ENCODE measurements at regions of chr3 and their contacts with region 1.

Region 1: DNA sequence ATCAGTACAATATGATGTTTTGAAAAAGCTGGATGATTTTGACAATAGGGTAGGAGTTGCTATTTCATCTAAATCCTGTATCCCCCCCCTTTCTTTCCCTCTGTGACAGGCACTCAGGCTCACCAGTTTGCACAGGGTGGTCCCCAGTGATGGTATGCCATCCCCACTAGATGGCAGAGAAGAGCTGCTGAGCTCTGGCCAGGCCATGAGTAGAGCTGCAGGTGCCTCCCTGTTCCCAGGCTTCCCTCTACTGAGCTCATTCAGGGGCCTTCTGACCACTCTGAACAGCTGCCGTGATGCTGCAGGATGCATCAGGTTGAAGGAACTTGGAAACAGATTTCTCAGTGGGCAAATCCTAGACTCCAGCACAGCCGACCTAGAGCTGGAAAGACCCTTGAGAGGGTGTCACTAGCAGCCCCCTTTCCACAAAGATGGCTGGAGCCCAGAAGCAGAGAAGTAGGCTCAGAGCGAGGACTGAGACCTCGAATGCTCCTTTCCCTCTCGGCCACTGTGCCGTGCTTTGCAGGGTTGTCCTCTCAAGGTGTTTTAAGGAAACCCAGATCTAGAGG is 45.1 kb downstream of the EFCAB12 start:
- DNase-seq: peak; percentile 77
- ATAC-seq: peak; percentile 98
- H3K4me3 Mint-ChIP-seq: no peak overlapping the region
- H3K27ac Mint-ChIP-seq: no peak overlapping the region
- H3K4me1 Mint-ChIP-seq: peaks cover 13% of the 10 kb centered on the region
- H3K27me3 Mint-ChIP-seq: no peaks in the 10 kb centered on the region; the same call in 1 of the 2 replicates
- CTCF ChIP-seq: peak; percentile 58

Region 2: DNA sequence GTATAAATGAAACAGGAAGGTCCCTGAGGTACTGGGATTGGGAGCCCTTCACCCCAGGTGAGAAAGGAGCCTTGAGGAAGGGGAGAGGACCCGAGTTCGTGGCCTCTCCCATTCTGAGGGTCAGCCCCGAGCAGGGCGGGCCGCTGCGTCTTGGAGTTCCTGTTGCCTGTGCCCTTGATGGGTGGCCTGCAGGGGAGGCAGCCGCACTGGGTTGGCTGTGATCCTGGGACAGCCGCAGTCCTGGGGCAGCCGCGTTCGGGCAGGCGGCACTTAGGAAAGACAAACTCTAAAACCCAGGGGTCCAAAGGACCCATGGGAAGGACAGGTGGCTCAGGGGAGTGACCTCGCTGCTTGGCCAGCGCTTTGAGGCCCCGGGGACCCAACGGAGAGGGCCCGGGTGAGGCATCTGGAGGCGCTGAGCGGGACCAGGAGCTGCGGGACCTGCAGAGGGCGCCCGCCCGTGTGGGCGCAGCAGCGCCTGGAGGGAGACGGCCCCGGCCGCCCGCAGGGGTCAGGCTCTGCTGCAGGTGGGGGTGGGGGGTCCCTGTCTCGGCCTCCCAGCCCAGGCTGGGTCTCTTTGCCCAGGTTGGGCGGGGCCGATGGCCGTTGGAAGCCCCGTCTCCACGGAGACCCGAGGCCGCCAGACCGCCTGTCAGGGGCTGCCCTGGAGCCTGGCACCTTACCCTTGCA is 39.6 kb before region 1 on chr3:
- CTCF ChIA-PET with region 1: interaction called, 17 read pairs
- POLR2A ChIA-PET with region 1: no interaction called
- DNase-seq: peak; percentile 75
- ATAC-seq: peak; percentile 84
- H3K4me3 Mint-ChIP-seq: peak overlapping the region; percentile 65
- H3K27ac Mint-ChIP-seq: no peak overlapping the region
- H3K4me1 Mint-ChIP-seq: peaks cover 13% of the 10 kb centered on the region
- H3K27me3 Mint-ChIP-seq: peaks cover 5% of the 10 kb centered on the region
- CTCF ChIP-seq: no peak

Region 3: GRCh38 chr3:129352045-129352444 is 31.3 kb before region 1 on chr3:
- CTCF ChIA-PET with region 1: interaction called, 16 read pairs
- POLR2A ChIA-PET with region 1: no interaction called
- DNase-seq: peak; percentile 47
- ATAC-seq: peak; percentile 88
- H3K4me3 Mint-ChIP-seq: no peak overlapping the region
- H3K27ac Mint-ChIP-seq: no peak overlapping the region
- H3K4me1 Mint-ChIP-seq: peaks cover 5% of the 10 kb centered on the region; the same call in 1 of the 2 replicates
- H3K27me3 Mint-ChIP-seq: no peaks in the 10 kb centered on the region
- CTCF ChIP-seq: 0 out of 2 replicates have a peak, but pooled peaks have one; percentile 27

Region 4: GRCh38 chr3:129367821-129368220 is 15.6 kb before region 1 on chr3:
- CTCF ChIA-PET with region 1: interaction called, 13 read pairs
- POLR2A ChIA-PET with region 1: no interaction called
- DNase-seq: no peak
- ATAC-seq: no peak
- H3K4me3 Mint-ChIP-seq: no peak overlapping the region
- H3K27ac Mint-ChIP-seq: no peak overlapping the region
- H3K4me1 Mint-ChIP-seq: no peaks in the 10 kb centered on the region
- H3K27me3 Mint-ChIP-seq: peaks cover 5% of the 10 kb centered on the region; the same call in 1 of the 2 replicates
- CTCF ChIP-seq: no peak

Region 5: GRCh38 chr3:129409541-129409940 is 26.2 kb after region 1 on chr3:
- CTCF ChIA-PET with region 1: interaction called, 10 read pairs
- POLR2A ChIA-PET with region 1: no interaction called
- DNase-seq: no peak
- ATAC-seq: no peak
- H3K4me3 Mint-ChIP-seq: no peak overlapping the region
- H3K27ac Mint-ChIP-seq: no peak overlapping the region
- H3K4me1 Mint-ChIP-seq: no peaks in the 10 kb centered on the region
- H3K27me3 Mint-ChIP-seq: no peaks in the 10 kb centered on the region; the same call in 1 of the 2 replicates
- CTCF ChIP-seq: no peak

Region 6: GRCh38 chr3:129428376-129429079 is 45.2 kb after region 1 on chr3 and contains the start of gene EFCAB12:
- CTCF ChIA-PET with region 1: interaction called, 18 read pairs
- POLR2A ChIA-PET with region 1: no interaction called
- DNase-seq: peak; percentile 97
- ATAC-seq: peak; percentile 86
- H3K4me3 Mint-ChIP-seq: peak within 1 kb of the TSS; percentile 78
- H3K27ac Mint-ChIP-seq: peak within 1 kb of the TSS; percentile 91
- H3K4me1 Mint-ChIP-seq: peaks cover 47% of the 10 kb centered on the region
- H3K27me3 Mint-ChIP-seq: peaks cover 18% of the 10 kb centered on the region
- CTCF ChIP-seq: no peak
- total RNA-seq, gene EFCAB12: 0.16 to 0.34 TPM (median 0.20 TPM) in 3 replicates

Region 7: GRCh38 chr3:129439817-129440617 is 56.6 kb after region 1 on chr3 and contains the starts of genes IFT122 and MBD4:
- CTCF ChIA-PET with region 1: interaction called, 25 read pairs
- POLR2A ChIA-PET with region 1: no interaction called
- DNase-seq: peak; percentile 98
- ATAC-seq: peak; percentile 94
- H3K4me3 Mint-ChIP-seq: peak within 1 kb of the TSS; percentile 99
- H3K27ac Mint-ChIP-seq: peak within 1 kb of the TSS; percentile 100
- H3K4me1 Mint-ChIP-seq: peaks cover 31% of the 10 kb centered on the region
- H3K27me3 Mint-ChIP-seq: no peaks in the 10 kb centered on the region; the same call in 1 of the 2 replicates
- CTCF ChIP-seq: no peak
- total RNA-seq, gene IFT122: 21.6 to 24.2 TPM (median 22.8 TPM) in 3 replicates
- total RNA-seq, gene MBD4: 31.4 to 36.9 TPM (median 33.0 TPM) in 3 replicates